Psoas muscle (tissue), 8 donors: ENCODE measurements at regions of chr10 and their contacts with region 1.

Region 1: GRCh38 chr10:131786756-131787605 is 113.8 kb upstream of the PPP2R2D start:
- DNase-seq: no peak
- ATAC-seq: no peak
- H3K4me3 ChIP-seq: no peak overlapping the region
- H3K27ac ChIP-seq: no peak overlapping the region
- H3K4me1 ChIP-seq: no peaks in the 10 kb centered on the region
- H3K27me3 ChIP-seq: peaks cover 0 to under 1% (median 0%) of the 10 kb centered on the region in 3 donors
- CTCF ChIP-seq: peak; percentile 68

Region 2: DNA sequence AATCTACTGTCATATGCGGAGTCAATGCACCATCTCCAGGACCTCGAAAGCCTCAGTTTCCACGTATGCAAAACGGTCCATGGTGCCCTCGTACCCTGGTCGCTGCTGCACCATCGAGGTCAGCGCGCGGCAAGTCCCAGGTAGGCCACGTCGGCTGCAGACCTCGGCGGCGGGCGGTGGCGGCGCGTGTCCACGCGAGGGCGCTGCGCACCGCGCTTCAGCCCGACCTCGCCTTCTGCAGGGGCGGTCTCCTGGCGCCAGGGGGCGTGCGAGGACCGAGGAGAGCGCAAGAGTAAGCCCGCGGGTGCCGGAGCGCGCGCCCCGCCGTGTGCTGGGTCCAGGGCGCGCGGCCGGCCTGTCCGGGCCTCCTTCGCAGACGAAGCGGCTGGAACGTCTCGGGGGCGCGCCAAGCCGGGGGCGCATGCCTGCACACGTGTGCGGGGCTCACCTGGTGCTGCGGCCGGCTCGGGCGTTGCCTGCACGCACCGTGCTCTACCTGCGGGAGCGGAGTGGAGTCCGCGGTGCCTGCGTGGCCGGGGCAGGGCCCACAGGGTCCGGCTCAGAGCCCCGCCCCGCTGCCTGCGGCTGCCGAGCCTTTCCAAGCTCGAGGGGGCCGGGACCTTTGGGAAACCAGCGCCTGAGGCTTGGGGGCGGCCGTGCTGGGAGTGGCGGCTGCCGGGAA is 1596.8 kb before region 1 on chr10:
- intact Hi-C with region 1: loop called in 1 of 2 experiments (anchors 5 kb)
- DNase-seq: peak; percentile 89 to 94
- ATAC-seq: peak; percentile 87 to 94 (median 92)
- H3K4me3 ChIP-seq: peak overlapping the region; percentile 74
- H3K27ac ChIP-seq: no peak overlapping the region
- H3K4me1 ChIP-seq: no peaks in the 10 kb centered on the region
- H3K27me3 ChIP-seq: no peaks in the 10 kb centered on the region
- CTCF ChIP-seq: peak; percentile 100

Region 3: GRCh38 chr10:131453594-131454355 is 333.2 kb before region 1 on chr10:
- intact Hi-C with region 1: loop called in 1 of 2 experiments (anchors 5 kb)
- DNase-seq: peak; percentile 71 to 80
- ATAC-seq: peak in 3 of 4 donors; percentile 49 to 68 (median 64)
- H3K4me3 ChIP-seq: peak overlapping the region; percentile 44
- H3K27ac ChIP-seq: no peak overlapping the region
- H3K4me1 ChIP-seq: no peaks in the 10 kb centered on the region
- H3K27me3 ChIP-seq: peaks cover 0 to 29% (median 2%) of the 10 kb centered on the region in 3 donors
- CTCF ChIP-seq: peak; percentile 73